K562 (cell line): ENCODE measurements at regions of chr11 and their contacts with region 1.

Region 1: GRCh38 chr11:5204787-5205186 is 4.3 kb upstream of the OR51V1 start:
- DNase-seq: peak; percentile 71 to 93 (median 80)
- ATAC-seq: peak; percentile 96
- H3K4me3 ChIP-seq: no peak overlapping the region
- H3K27ac ChIP-seq: no peak overlapping the region
- H3K4me1 ChIP-seq: peaks cover 0 to 2% of the 10 kb centered on the region in 2 experiments; a peak in 2 of 5 replicates
- H3K27me3 ChIP-seq: no peaks in the 10 kb centered on the region
- CTCF ChIP-seq: peak; percentile 78 to 89 (median 79)
- EP300 ChIP-seq: peak; percentile 27; the same call in 1 of the 2 replicates
- POLR2A ChIP-seq: no peak
- RAD21 ChIP-seq: peak; percentile 99

Region 2: DNA sequence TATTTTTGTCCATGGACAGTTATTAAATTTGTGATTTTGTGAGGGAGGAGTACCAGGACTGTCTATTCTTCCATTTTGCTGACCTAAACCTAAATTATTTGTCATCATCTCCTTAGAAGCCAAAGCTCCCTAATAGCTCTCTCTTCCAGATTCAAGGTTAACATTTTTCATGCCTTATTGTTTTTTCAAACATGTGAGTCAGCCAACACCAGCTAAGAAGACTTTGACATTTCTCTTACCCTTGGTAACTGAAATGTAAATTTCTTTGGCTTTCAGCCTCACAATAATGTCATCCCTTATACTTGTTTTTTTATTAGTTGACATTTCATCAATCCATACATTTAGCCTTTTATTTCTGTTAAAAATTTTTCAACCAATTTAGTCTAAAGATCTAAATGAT is 116.2 kb before region 1 on chr11:
- CTCF ChIA-PET with region 1: no interaction called
- POLR2A ChIA-PET with region 1: no interaction called
- in situ Hi-C with region 1: no loop called
- intact Hi-C with region 1: no loop called
- DNase-seq: no peak
- ATAC-seq: no peak
- H3K4me3 ChIP-seq: no peak overlapping the region
- H3K27ac ChIP-seq: no peak overlapping the region
- H3K4me1 ChIP-seq: peaks cover 0 to 4% of the 10 kb centered on the region in 2 experiments; a peak in 1 of 5 replicates
- H3K27me3 ChIP-seq: no peaks in the 10 kb centered on the region
- CTCF ChIP-seq: no peak
- EP300 ChIP-seq: no peak
- POLR2A ChIP-seq: no peak
- RAD21 ChIP-seq: no peak

Region 3: GRCh38 chr11:5242933-5243815 is 38.4 kb after region 1 on chr11:
- CTCF ChIA-PET with region 1: no interaction called
- POLR2A ChIA-PET with region 1: interaction called, 3 read pairs
- in situ Hi-C with region 1: no loop called
- intact Hi-C with region 1: loop called (anchors 2 kb)
- DNase-seq: peak in 2 of 4 experiments; percentile 59 to 88
- ATAC-seq: peak; percentile 61
- H3K4me3 ChIP-seq: peak overlapping the region; percentile 26
- H3K27ac ChIP-seq: peak overlapping the region; percentile 80
- H3K4me1 ChIP-seq: peaks cover 8 to 36% of the 10 kb centered on the region in 2 experiments
- H3K27me3 ChIP-seq: no peaks in the 10 kb centered on the region
- CTCF ChIP-seq: no peak
- EP300 ChIP-seq: peak; percentile 26; the same call in 1 of the 2 replicates
- POLR2A ChIP-seq: peak; percentile 93
- RAD21 ChIP-seq: no peak

Region 4: DNA sequence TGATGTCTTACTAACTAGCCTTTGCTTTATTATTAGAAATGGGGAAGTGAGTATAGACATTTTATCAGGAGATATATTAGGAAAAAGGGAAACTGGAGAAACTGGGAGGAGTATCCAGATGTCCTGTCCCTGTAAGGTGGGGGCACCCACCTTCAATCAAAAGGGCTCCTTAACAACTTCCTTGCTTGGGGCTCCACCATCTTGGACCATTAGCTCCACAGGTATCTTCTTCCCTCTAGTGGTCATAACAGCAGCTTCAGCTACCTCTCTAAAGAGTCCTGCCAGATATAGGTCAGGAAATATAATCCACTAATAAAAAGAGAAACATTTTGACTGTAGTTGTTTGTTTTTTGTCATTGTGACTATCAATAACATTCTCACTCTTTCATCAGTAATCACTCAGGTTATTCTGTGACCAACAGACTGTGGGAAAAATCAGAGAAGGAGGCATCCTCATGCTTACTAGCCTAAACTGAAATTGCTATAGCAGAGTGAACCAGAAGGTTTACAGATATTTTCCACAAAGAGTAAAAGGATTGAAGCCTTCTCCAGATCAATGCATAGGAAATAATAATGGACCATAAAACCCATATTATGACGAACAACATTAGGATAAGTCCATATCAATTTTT is 86.5 kb after region 1 on chr11:
- CTCF ChIA-PET with region 1: interaction called, 38 read pairs
- POLR2A ChIA-PET with region 1: no interaction called
- in situ Hi-C with region 1: no loop called
- intact Hi-C with region 1: loop called (anchors 1 kb)
- DNase-seq: peak; percentile 49 to 88 (median 63)
- ATAC-seq: peak; percentile 81
- H3K4me3 ChIP-seq: no peak overlapping the region
- H3K27ac ChIP-seq: peak overlapping the region; percentile 31
- H3K4me1 ChIP-seq: peaks cover 18 to 50% of the 10 kb centered on the region in 2 experiments; a peak in 4 of 5 replicates
- H3K27me3 ChIP-seq: no peaks in the 10 kb centered on the region
- CTCF ChIP-seq: peak; percentile 80 to 93 (median 89)
- EP300 ChIP-seq: peak; percentile 42; the same call in 1 of the 2 replicates
- POLR2A ChIP-seq: no peak
- RAD21 ChIP-seq: peak; percentile 95 to 98

Region 5: DNA sequence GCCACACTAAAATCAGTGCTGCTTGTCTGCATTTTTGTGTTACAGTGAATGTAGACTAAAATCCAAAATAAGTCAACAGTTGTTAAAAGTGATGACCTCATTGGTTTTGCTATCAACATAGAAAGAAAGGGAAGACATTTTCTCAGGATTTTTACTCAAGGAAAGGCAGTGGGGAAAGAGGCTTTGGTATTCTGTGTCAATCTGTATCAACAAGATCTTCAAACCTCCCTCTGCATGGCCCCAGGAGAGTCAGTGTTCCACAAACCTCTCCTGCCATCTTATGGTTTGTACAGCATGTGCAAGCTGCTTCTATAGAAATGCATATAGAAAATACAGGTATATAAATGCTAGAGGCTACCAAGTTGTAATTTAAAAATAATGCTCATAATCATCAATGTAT is 165.0 kb after region 1 on chr11:
- CTCF ChIA-PET with region 1: interaction called, 11 read pairs
- POLR2A ChIA-PET with region 1: no interaction called
- in situ Hi-C with region 1: loop called (anchors 5 kb)
- intact Hi-C with region 1: loop called (anchors 2 kb)
- DNase-seq: peak in 2 of 4 experiments; percentile 42 to 63
- ATAC-seq: peak; percentile 84
- H3K4me3 ChIP-seq: no peak overlapping the region
- H3K27ac ChIP-seq: no peak overlapping the region
- H3K4me1 ChIP-seq: peaks cover 0 to 15% of the 10 kb centered on the region in 2 experiments; a peak in 2 of 5 replicates
- H3K27me3 ChIP-seq: no peaks in the 10 kb centered on the region
- CTCF ChIP-seq: peak; percentile 46 to 68 (median 50); a peak in 4 of 6 replicates
- EP300 ChIP-seq: no peak
- POLR2A ChIP-seq: no peak
- RAD21 ChIP-seq: peak; percentile 72 to 82

Region 6: GRCh38 chr11:5507177-5507932 is 302.6 kb after region 1 on chr11:
- CTCF ChIA-PET with region 1: no interaction called
- POLR2A ChIA-PET with region 1: interaction called, 4 read pairs
- in situ Hi-C with region 1: no loop called
- intact Hi-C with region 1: loop called (anchors 10 kb)
- DNase-seq: peak; percentile 36 to 62 (median 48)
- ATAC-seq: peak; percentile 48
- H3K4me3 ChIP-seq: no peak overlapping the region
- H3K27ac ChIP-seq: no peak overlapping the region
- H3K4me1 ChIP-seq: peaks cover 24 to 49% of the 10 kb centered on the region in 2 experiments; a peak in 4 of 5 replicates
- H3K27me3 ChIP-seq: no peaks in the 10 kb centered on the region
- CTCF ChIP-seq: peak; percentile 52 to 62 (median 59); a peak in 5 of 6 replicates
- EP300 ChIP-seq: no peak
- POLR2A ChIP-seq: no peak
- RAD21 ChIP-seq: peak in 1 of 2 experiments; percentile 24; a peak in 1 of 4 replicates